MCF 10A (cell line): ENCODE measurements at regions of chr17 and their contacts with region 1.

Region 1: DNA sequence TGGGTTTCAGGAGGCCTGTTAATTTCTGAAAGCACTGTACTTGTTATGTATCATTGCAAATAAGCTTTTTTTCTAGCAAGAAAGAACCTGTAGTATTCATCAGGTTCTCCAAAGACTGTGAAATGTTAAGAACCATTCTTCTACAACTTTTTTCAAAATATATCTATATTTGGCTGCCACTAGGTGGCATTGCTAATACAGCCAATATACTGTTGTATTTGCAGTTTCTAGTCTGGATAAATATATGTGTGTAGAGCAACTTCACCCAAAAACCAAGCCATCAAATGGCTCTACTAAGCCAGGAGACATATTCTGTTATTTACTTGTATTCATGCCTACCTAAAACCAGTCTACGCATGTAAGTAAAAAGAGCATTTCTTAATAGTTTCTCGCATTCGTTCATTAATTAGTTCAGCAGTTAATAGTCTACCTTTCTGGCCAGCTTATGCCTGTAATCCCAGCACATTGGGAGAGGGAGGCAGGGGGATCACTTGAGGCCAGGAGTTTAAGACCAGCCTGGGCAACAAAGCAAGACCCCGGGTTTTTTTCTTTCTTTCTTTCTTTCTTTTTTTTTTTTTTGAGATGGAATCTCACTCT is 39.5 kb downstream of the VMP1 start:
- DNase-seq: peak; percentile 50
- H3K4me3 Mint-ChIP-seq: no peak overlapping the region
- H3K27ac Mint-ChIP-seq: no peak overlapping the region
- H3K4me1 Mint-ChIP-seq: no peaks in the 10 kb centered on the region
- H3K27me3 Mint-ChIP-seq: no peaks in the 10 kb centered on the region
- CTCF ChIP-seq: peak; percentile 58

Region 2: GRCh38 chr17:59716427-59716826 is 30.5 kb before region 1 on chr17:
- CTCF ChIA-PET with region 1: no interaction called
- POLR2A ChIA-PET with region 1: no interaction called
- intact Hi-C with region 1: no loop called
- DNase-seq: no peak
- H3K4me3 Mint-ChIP-seq: no peak overlapping the region
- H3K27ac Mint-ChIP-seq: no peak overlapping the region
- H3K4me1 Mint-ChIP-seq: peaks cover 8% of the 10 kb centered on the region
- H3K27me3 Mint-ChIP-seq: no peaks in the 10 kb centered on the region
- CTCF ChIP-seq: no peak

Region 3: DNA sequence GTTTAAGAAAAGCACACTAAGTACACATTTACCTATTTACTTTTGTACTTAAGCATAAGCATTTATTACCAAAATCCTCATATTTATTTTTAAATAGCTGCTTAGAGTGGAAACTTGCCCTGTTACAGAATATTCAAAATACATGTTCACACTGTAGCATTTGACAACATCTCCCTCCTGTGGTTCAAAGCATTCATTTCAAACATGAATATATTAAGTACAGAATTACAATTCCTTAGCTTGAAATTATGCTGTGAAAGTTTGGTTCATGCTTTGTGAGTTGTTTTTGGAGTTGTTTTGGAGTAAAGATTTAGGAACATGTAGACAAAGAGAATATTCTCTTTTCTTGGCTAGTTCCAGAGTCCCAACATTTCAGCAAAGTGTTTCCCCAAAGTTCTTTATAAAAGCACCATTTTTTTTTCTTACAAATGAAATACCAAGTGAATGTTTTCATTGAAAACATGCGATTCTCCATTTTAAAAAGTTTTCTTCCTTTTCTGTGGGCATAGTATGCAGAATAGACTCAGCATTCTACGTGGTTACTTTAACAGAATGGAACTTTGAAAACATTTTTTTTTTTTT is 112.6 kb after region 1 on chr17:
- CTCF ChIA-PET with region 1: interaction called, 46 read pairs
- POLR2A ChIA-PET with region 1: no interaction called
- intact Hi-C with region 1: loop called (anchors 1 kb)
- DNase-seq: peak; percentile 44
- H3K4me3 Mint-ChIP-seq: no peak overlapping the region
- H3K27ac Mint-ChIP-seq: no peak overlapping the region
- H3K4me1 Mint-ChIP-seq: peaks cover 5% of the 10 kb centered on the region
- H3K27me3 Mint-ChIP-seq: no peaks in the 10 kb centered on the region
- CTCF ChIP-seq: peak; percentile 56

Region 4: GRCh38 chr17:60049936-60050335 is 303.0 kb after region 1 on chr17:
- CTCF ChIA-PET with region 1: no interaction called
- POLR2A ChIA-PET with region 1: no interaction called
- intact Hi-C with region 1: loop called (anchors 10 kb)
- DNase-seq: no peak
- H3K4me3 Mint-ChIP-seq: no peak overlapping the region
- H3K27ac Mint-ChIP-seq: no peak overlapping the region
- H3K4me1 Mint-ChIP-seq: no peaks in the 10 kb centered on the region
- H3K27me3 Mint-ChIP-seq: no peaks in the 10 kb centered on the region
- CTCF ChIP-seq: no peak